Activated CD4-positive, alpha-beta memory T cell treated with anti-CD3 and anti-CD28 coated beads for 36 hours (primary cell): ENCODE measurements at regions of chr2 and their contacts with region 1.

Region 1: GRCh38 chr2:73985308-73986084 is 786 bp downstream of the TET3 start:
- DNase-seq: peak; percentile 80
- H3K4me3 Mint-ChIP-seq: peak overlapping the region; percentile 82
- H3K27ac Mint-ChIP-seq: peak overlapping the region; percentile 95
- H3K4me1 Mint-ChIP-seq: peaks cover 71% of the 10 kb centered on the region
- H3K27me3 Mint-ChIP-seq: no peaks in the 10 kb centered on the region

Region 2: DNA sequence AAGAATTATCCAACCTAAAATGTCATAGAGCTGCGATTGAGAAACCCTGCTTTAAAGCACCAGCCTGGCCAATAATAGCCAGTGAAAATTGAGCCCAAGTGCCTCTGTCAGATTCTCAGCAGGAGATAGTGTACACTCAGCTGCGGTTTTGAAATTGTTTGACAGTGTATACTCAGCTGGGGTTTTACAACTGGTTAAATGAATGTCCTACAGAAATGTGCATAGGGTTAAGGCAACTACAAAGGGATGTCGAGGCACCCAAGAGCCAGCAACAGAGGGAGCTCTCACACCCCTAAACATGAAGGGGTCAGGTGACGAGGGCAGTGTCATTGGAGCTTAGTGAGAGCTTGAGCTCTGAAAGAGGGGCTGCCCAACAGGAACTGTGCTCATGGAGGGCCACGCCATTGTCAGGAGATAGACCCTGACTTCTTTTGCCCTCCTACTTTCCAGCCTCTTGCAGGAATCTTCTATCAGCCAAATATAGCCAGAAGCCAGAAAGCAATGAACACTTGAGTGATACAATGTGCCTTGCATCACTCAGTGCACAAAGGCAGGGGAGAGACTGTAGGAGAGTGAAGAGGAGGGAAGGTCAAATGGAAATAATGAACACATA is 77.5 kb before region 1 on chr2:
- CTCF ChIA-PET with region 1: interaction called, 25 read pairs
- POLR2A ChIA-PET with region 1: no interaction called
- intact Hi-C with region 1: loop called (anchors 1 kb)
- DNase-seq: peak; percentile 75
- H3K4me3 Mint-ChIP-seq: no peak overlapping the region
- H3K27ac Mint-ChIP-seq: no peak overlapping the region
- H3K4me1 Mint-ChIP-seq: peaks cover 7% of the 10 kb centered on the region
- H3K27me3 Mint-ChIP-seq: no peaks in the 10 kb centered on the region

Region 3: GRCh38 chr2:73931531-73932500 is 53.7 kb before region 1 on chr2:
- CTCF ChIA-PET with region 1: no interaction called
- POLR2A ChIA-PET with region 1: interaction called, 4 read pairs
- intact Hi-C with region 1: loop called (anchors 2 kb)
- DNase-seq: peak; percentile 77
- H3K4me3 Mint-ChIP-seq: peak overlapping the region; percentile 4
- H3K27ac Mint-ChIP-seq: peak overlapping the region; percentile 75
- H3K4me1 Mint-ChIP-seq: peaks cover 75% of the 10 kb centered on the region
- H3K27me3 Mint-ChIP-seq: no peaks in the 10 kb centered on the region

Region 4: GRCh38 chr2:73939419-73939818 is 46.1 kb before region 1 on chr2:
- CTCF ChIA-PET with region 1: interaction called, 5 read pairs
- POLR2A ChIA-PET with region 1: interaction called, 4 read pairs
- intact Hi-C with region 1: loop called (anchors 1 kb)
- DNase-seq: peak; percentile 56
- H3K4me3 Mint-ChIP-seq: no peak overlapping the region
- H3K27ac Mint-ChIP-seq: peak overlapping the region; percentile 73
- H3K4me1 Mint-ChIP-seq: peaks cover 85% of the 10 kb centered on the region
- H3K27me3 Mint-ChIP-seq: no peaks in the 10 kb centered on the region

Region 5: GRCh38 chr2:73963385-73964120 is 21.9 kb before region 1 on chr2:
- CTCF ChIA-PET with region 1: interaction called, 5 read pairs
- POLR2A ChIA-PET with region 1: interaction called, 11 read pairs
- intact Hi-C with region 1: loop called (anchors 1 kb)
- DNase-seq: peak; percentile 74
- H3K4me3 Mint-ChIP-seq: peak overlapping the region; percentile 53
- H3K27ac Mint-ChIP-seq: peak overlapping the region; percentile 86
- H3K4me1 Mint-ChIP-seq: peaks cover 30% of the 10 kb centered on the region
- H3K27me3 Mint-ChIP-seq: no peaks in the 10 kb centered on the region

Region 6: DNA sequence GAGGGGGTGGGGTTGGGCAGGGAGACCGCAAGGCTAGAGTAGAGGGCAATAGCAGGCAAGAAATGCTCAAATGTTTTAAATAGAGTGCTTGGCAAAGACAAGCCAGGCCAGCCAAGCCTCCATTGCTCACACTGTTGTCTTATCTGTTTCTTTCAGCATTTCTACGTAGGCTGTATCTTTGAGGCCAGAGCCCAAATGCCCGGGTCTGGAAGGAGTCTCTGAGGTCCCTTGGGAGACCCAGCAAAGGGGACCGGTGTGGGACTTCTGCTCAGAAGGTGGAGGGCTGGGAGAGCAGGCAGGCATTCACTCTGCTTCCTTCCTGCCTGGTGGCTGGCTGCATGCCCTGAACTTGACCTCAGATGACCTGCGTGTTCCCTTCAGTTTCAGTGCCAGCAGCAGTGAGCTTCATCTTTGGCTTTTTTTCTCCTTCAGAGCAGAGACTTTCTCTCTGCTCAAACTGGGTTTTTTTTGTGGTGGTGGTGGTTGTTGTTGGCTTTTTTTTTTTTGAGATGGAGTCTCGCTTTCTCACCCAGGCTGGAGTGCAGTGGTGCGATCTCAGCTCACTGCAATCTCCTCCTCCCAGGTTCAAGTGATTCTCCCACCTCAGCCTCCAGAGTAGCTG is 14.5 kb before region 1 on chr2:
- CTCF ChIA-PET with region 1: interaction called, 3 read pairs
- POLR2A ChIA-PET with region 1: interaction called, 11 read pairs
- intact Hi-C with region 1: loop called (anchors 1 kb)
- DNase-seq: peak; percentile 75
- H3K4me3 Mint-ChIP-seq: peak overlapping the region; percentile 46
- H3K27ac Mint-ChIP-seq: peak overlapping the region; percentile 80
- H3K4me1 Mint-ChIP-seq: peaks cover 34% of the 10 kb centered on the region
- H3K27me3 Mint-ChIP-seq: no peaks in the 10 kb centered on the region

Region 7: DNA sequence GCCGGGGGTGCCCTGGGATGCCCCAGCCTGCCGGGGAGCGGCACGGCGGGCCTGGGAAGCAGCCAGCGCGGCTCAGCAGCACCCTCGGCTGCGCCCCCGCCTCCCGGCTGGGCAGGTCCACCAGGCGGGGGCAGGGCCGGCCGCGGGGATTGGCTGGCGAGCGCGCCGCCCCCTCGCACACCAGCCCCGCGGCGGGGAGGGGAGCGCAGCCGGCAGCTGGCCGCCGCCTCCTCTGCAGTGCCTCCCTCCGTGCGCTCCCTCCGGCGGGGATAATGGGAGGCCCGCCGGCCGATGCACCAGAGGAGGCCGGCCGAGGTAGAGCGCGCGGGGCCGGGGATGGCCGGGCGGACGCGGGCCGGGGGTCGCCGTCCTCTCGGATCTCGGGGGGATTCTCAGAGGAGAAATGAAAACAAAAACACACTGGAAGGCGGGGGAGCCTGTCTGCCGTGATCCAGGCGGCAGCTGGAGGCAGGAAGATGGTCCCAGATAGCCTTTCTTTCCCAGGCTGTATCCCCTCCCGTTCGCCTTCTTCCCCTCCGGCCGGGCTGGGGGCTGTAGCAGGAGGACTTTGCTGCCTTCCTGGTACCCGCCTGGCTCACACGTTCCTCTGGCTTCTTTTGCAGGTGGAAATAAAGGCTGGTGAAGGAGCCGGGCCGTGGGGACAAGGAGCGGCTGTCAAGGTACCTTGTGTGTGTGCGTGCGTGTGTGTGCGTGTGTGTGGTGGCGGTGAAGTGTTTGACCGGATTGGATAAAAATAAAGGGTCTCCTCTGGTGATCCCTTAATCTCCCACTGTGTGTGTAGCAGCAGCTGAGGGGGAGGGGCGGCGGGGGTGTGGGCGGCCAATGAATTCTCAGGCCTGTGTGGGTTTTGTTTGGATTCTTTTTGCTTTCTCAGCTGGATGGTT is 17.2 kb after region 1 on chr2:
- CTCF ChIA-PET with region 1: interaction called, 16 read pairs
- POLR2A ChIA-PET with region 1: interaction called, 15 read pairs
- intact Hi-C with region 1: loop called (anchors 1 kb)
- DNase-seq: peak; percentile 84
- H3K4me3 Mint-ChIP-seq: peak overlapping the region; percentile 76
- H3K27ac Mint-ChIP-seq: peak overlapping the region; percentile 36
- H3K4me1 Mint-ChIP-seq: peaks cover 83% of the 10 kb centered on the region
- H3K27me3 Mint-ChIP-seq: no peaks in the 10 kb centered on the region